A549 (cell line): ENCODE measurements at regions of chr5 and their contacts with region 1.

Region 1: GRCh38 chr5:141878711-141879425 is 658 bp upstream of the PCDH1 start:
- DNase-seq: peak; percentile 74 to 91
- ATAC-seq: peak; percentile 65 to 89
- H3K4me3 ChIP-seq: peak overlapping the region; percentile 64
- H3K27ac ChIP-seq: peak overlapping the region; percentile 41 to 83; a peak in 4 of 6 replicates
- H3K4me1 ChIP-seq: peaks cover 22% of the 10 kb centered on the region
- CTCF ChIP-seq: peak; percentile 97
- EP300 ChIP-seq: no peak
- POLR2A ChIP-seq: no peak
- RAD21 ChIP-seq: peak; percentile 94

Region 2: GRCh38 chr5:141605523-141606277 is 273.2 kb before region 1 on chr5:
- CTCF ChIA-PET with region 1: no interaction called
- POLR2A ChIA-PET with region 1: no interaction called
- DNase-seq: no peak
- ATAC-seq: no peak
- H3K4me3 ChIP-seq: no peak overlapping the region
- H3K27ac ChIP-seq: peak overlapping the region in 1 of 2 experiments; percentile 18; a peak in 2 of 6 replicates
- H3K4me1 ChIP-seq: peaks cover 50% of the 10 kb centered on the region
- CTCF ChIP-seq: no peak
- EP300 ChIP-seq: no peak
- POLR2A ChIP-seq: no peak
- RAD21 ChIP-seq: no peak

Region 3: GRCh38 chr5:141657937-141658545 is 220.8 kb before region 1 on chr5:
- CTCF ChIA-PET with region 1: interaction called, 11 read pairs
- POLR2A ChIA-PET with region 1: no interaction called
- DNase-seq: peak; percentile 63 to 70
- ATAC-seq: peak; percentile 32 to 44; a peak in 3 of 6 replicates
- H3K4me3 ChIP-seq: no peak overlapping the region
- H3K27ac ChIP-seq: no peak overlapping the region
- H3K4me1 ChIP-seq: peaks cover 9% of the 10 kb centered on the region
- CTCF ChIP-seq: no peak
- EP300 ChIP-seq: no peak
- POLR2A ChIP-seq: no peak
- RAD21 ChIP-seq: no peak

Region 4: GRCh38 chr5:141713616-141714309 is 165.1 kb before region 1 on chr5:
- CTCF ChIA-PET with region 1: interaction called, 58 read pairs
- POLR2A ChIA-PET with region 1: no interaction called
- DNase-seq: peak in 1 of 2 experiments; percentile 60
- ATAC-seq: peak; percentile 40 to 68; a peak in 5 of 6 replicates
- H3K4me3 ChIP-seq: no peak overlapping the region
- H3K27ac ChIP-seq: peak overlapping the region; percentile 22 to 45; a peak in 4 of 6 replicates
- H3K4me1 ChIP-seq: peaks cover 21% of the 10 kb centered on the region
- CTCF ChIP-seq: no peak
- EP300 ChIP-seq: no peak
- POLR2A ChIP-seq: no peak
- RAD21 ChIP-seq: no peak

Region 5: DNA sequence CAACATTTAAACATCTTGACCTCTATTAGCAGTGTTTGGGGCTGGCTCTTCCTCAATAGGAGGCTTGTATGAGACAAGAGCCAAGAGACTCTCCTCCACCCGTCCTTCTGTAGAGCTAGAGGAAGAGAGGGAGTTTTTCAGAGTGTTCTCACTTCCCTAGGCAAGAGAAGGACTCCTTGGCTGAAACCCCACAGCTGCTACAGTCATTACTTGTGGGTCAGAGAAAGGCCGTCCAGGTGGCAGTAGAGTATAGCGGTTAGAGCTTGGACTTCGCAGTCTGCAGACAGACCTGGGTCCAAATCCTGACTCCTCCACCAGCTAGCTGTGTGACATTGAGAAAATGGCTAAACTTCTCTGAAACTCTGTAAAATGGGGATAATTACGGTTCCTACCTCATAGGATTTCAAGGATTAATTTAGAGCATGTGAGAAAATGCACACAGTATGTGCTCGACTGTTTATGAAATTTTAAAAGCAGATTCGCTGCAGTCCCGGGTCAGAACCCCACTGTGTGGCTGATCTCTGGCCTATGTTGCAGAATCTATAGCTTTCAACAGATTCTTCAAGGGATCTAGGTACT is 116.0 kb before region 1 on chr5:
- CTCF ChIA-PET with region 1: interaction called, 92 read pairs
- POLR2A ChIA-PET with region 1: no interaction called
- DNase-seq: peak in 1 of 2 experiments; percentile 22
- ATAC-seq: peak in 1 of 2 experiments; percentile 26; a peak in 1 of 6 replicates
- H3K4me3 ChIP-seq: no peak overlapping the region
- H3K27ac ChIP-seq: no peak overlapping the region
- H3K4me1 ChIP-seq: no peaks in the 10 kb centered on the region
- CTCF ChIP-seq: no peak
- EP300 ChIP-seq: no peak
- POLR2A ChIP-seq: no peak
- RAD21 ChIP-seq: peak in 1 of 2 experiments; percentile 37; a peak in 2 of 5 replicates

Region 6: DNA sequence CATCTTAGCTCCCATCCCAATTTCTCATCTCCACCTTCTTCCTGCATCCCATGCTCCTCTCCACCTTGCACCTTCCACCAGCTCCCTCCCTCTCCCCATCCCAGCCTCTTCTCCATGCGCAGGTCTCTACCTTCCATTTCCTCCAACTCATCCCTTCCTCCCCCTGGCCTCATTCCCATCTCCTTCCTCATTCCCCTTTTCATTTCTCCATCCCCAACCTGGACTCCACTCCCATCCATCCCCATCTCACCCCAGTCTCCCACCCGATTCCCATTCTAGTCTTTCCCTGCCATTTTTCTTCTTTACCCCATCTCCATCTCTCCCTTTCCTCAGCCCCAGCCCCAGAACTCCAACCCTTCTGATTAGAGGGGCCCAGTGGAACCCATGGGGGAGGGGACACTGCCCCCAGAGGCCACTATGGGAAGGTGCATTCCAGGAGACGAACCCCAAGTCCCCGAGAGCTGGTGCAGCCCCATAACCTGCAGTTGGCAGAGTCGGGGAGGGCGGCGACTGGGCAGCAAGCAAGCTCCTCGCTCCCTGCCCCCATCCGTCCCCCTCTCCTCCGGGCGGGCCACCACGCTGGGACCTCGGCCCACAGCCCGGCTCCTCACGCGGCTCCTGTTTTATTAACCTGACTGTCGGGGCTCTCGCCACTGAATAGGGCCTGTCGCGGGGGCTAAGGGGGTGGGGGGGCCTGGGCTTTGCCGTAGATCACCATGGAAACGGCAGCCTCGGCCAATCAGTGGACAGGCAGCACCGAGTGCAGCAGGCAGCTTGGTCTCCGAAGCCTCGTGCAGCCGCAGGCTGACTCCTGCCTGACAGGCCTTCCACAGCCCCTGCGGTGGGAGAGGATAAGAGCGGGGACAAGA is 67.3 kb before region 1 on chr5:
- CTCF ChIA-PET with region 1: interaction called, 95 read pairs
- POLR2A ChIA-PET with region 1: no interaction called
- DNase-seq: peak in 1 of 2 experiments; percentile 62
- ATAC-seq: peak; percentile 44 to 74; a peak in 4 of 6 replicates
- H3K4me3 ChIP-seq: no peak overlapping the region
- H3K27ac ChIP-seq: no peak overlapping the region
- H3K4me1 ChIP-seq: no peaks in the 10 kb centered on the region
- CTCF ChIP-seq: peak; percentile 41
- EP300 ChIP-seq: no peak
- POLR2A ChIP-seq: no peak
- RAD21 ChIP-seq: 0 out of 5 replicates have a peak, but pooled peaks of 1 of the 2 experiments have one; percentile 11

Region 7: GRCh38 chr5:141858084-141858765 is 20.6 kb before region 1 on chr5:
- CTCF ChIA-PET with region 1: interaction called, 18 read pairs
- POLR2A ChIA-PET with region 1: no interaction called
- DNase-seq: no peak
- ATAC-seq: no peak
- H3K4me3 ChIP-seq: no peak overlapping the region
- H3K27ac ChIP-seq: no peak overlapping the region
- H3K4me1 ChIP-seq: no peaks in the 10 kb centered on the region
- CTCF ChIP-seq: no peak
- EP300 ChIP-seq: no peak
- POLR2A ChIP-seq: no peak
- RAD21 ChIP-seq: no peak

Region 8: GRCh38 chr5:141914199-141914743 is 35.4 kb after region 1 on chr5:
- CTCF ChIA-PET with region 1: interaction called, 18 read pairs
- POLR2A ChIA-PET with region 1: no interaction called
- DNase-seq: no peak
- ATAC-seq: peak in 1 of 2 experiments; percentile 58; a peak in 3 of 6 replicates
- H3K4me3 ChIP-seq: no peak overlapping the region
- H3K27ac ChIP-seq: no peak overlapping the region
- H3K4me1 ChIP-seq: no peaks in the 10 kb centered on the region
- CTCF ChIP-seq: no peak
- EP300 ChIP-seq: no peak
- POLR2A ChIP-seq: no peak
- RAD21 ChIP-seq: peak in 1 of 2 experiments; percentile 28; a peak in 2 of 5 replicates